HEK293T (cell line): ENCODE measurements at regions of chr13 and their contacts with region 1.

Region 1: GRCh38 chr13:40777166-40777808 is 6.3 kb upstream of the MRPS31 start:
- DNase-seq: peak; percentile 37

Region 2: DNA sequence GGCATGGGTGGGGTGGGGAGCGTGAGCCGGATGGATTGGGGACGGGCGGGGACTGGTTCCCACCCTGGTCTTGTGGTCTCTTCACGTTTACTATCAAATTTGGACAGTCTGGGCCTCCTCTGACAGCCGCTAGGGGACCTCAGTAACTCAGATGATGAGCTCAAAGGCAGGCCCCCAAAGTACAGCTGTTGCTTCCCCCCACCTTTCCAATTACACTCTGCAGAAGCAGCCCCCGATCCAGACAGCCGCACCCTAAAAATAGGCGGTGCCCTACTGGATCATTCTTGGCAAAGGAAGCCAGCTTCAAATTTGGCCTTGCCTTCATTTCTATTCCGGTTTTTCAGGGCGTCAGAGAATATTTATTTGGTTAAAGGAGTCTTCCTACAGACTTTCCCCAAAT is 109.0 kb before region 1 on chr13:
- CTCF ChIA-PET with region 1: interaction called, 10 read pairs
- POLR2A ChIA-PET with region 1: no interaction called
- DNase-seq: peak; percentile 43

Region 3: DNA sequence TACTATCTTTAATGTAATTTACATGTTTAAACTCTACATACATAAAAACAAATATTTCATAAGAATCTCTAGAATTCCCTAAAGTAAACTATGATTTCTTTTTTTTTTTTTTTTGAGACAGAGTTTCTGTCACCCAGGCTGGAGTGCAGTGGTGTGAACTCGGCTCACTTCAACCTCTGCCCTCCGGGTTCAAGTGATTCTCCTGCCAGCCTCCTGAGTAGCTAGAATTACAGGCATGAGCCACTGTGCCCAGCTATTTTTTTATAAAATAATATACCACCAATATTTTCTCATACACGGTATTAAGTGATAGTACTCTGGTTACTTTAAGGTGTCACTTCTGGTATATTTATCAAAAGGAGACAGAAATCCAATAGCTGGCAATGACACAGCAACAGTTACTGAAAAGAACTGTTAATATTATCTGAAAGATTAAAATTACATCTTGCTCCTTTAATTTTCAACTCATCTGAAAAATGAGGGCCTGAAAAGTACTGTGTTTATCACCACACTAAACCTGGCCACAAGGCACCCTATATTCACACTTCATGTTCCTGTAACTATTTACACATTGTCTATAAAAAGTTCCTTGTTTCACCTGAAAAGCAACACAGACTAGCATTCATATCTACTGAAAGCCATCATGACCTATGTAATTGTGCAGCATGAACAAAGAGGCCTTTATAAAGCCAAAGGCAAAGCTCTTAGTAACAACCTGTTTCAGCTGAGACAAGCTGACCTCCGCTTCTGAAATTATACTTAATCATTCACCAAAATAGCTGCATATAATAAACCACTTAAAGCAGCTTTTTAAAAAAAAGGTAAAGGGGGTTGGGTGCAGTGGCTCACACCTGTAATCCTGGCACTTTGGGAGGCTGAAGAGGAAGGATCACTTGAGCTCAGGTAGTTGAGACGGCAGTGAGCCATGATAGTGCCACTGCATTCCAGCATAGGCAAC is 118.2 kb after region 1 on chr13:
- CTCF ChIA-PET with region 1: no interaction called
- POLR2A ChIA-PET with region 1: no interaction called
- DNase-seq: no peak

Region 4: GRCh38 chr13:41075034-41075433 is 297.7 kb after region 1 on chr13:
- CTCF ChIA-PET with region 1: no interaction called
- POLR2A ChIA-PET with region 1: no interaction called
- DNase-seq: peak; percentile 35